ENCODE measurements at regions of chrX and their contacts with region 1.

Region 1: DNA sequence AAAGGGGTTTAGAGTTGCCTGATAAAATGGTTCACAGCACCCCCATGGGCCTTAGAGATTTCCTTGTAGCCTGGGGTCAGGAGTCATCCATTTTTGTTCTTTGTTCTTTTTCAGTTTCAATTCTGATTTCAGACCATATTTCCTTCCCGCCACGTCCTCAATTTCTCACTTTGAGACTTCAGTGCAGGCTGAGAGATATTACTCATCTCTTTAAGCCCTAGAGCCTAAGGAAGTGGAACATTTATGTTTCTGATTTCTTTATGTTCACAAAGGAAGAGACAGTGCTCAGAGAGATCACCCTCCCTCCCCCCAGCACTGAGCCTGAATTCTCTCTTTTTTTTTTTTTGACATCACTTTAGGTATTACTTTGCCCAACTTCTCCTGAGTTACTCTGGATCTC is 56.3 kb downstream of the MSN start:
- DNase-seq: peak; percentile 79
- H3K4me3 Mint-ChIP-seq: peak overlapping the region; percentile 25
- H3K27ac Mint-ChIP-seq: peak overlapping the region; percentile 90
- H3K4me1 Mint-ChIP-seq: peaks cover 67% of the 10 kb centered on the region
- H3K27me3 Mint-ChIP-seq: no peaks in the 10 kb centered on the region

Region 2: DNA sequence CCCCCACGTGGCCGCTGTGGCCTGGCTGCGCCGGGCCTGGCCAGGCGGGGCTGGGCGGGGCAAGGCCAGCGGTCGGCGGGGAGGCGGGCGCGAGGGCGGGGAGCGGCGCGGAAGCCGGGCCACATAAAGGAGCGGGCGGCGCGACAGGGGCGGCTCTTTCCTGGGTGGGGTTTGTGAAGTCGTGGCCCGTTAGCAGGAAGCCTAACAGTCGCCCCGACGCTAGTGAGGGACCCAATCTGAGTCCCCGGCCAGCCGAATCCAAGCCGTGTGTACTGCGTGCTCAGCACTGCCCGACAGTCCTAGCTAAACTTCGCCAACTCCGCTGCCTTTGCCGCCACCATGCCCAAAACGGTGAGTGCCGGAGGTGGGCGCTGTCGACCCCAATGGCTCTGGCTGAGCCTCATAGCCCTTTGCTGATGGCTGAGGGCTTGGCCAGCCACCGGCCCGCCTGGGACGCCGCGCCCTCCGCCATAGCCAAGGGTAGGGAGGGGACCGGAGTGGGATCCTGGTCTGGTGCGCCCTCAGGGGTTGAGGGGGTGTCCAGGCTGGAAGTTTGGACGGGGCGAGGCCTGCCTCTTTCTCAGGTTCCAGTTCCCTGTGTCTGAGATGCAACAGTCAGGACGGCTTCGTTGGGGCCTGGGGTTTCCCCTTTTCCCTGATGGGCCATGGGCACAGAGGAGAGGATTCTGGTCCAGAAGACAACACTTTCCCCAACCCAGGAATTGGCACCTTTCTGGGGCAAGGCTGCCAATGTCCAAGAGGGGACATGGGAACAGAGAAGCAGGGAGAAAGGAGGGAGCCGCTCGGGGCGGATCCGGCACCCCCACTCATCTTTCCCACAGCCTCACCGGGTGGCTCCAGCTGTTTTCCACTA is 56.0 kb before region 1 on chrX and contains the start of gene MSN:
- intact Hi-C with region 1: loop called (anchors 1 kb)
- DNase-seq: peak; percentile 93
- H3K4me3 Mint-ChIP-seq: peak within 1 kb of the TSS; percentile 97
- H3K27ac Mint-ChIP-seq: peak within 1 kb of the TSS; percentile 97
- H3K4me1 Mint-ChIP-seq: peaks cover 30% of the 10 kb centered on the region
- H3K27me3 Mint-ChIP-seq: no peaks in the 10 kb centered on the region
- total RNA-seq, gene MSN: 480 and 482 TPM in 2 replicates

Region 3: GRCh38 chrX:65688403-65688871 is 35.3 kb before region 1 on chrX:
- intact Hi-C with region 1: loop called (anchors 5 kb)
- DNase-seq: no peak
- H3K4me3 Mint-ChIP-seq: peak overlapping the region; percentile 45
- H3K27ac Mint-ChIP-seq: peak overlapping the region; percentile 65
- H3K4me1 Mint-ChIP-seq: peaks cover 57% of the 10 kb centered on the region
- H3K27me3 Mint-ChIP-seq: no peaks in the 10 kb centered on the region

Region 4: GRCh38 chrX:65697915-65698796 is 25.6 kb before region 1 on chrX:
- intact Hi-C with region 1: loop called (anchors 1 kb)
- DNase-seq: peak; percentile 91
- H3K4me3 Mint-ChIP-seq: peak overlapping the region; percentile 77
- H3K27ac Mint-ChIP-seq: peak overlapping the region; percentile 96
- H3K4me1 Mint-ChIP-seq: peaks cover 60% of the 10 kb centered on the region
- H3K27me3 Mint-ChIP-seq: no peaks in the 10 kb centered on the region

Region 5: GRCh38 chrX:65706041-65706828 is 17.5 kb before region 1 on chrX:
- intact Hi-C with region 1: loop called (anchors 1 kb)
- DNase-seq: peak; percentile 66
- H3K4me3 Mint-ChIP-seq: peak overlapping the region; percentile 51
- H3K27ac Mint-ChIP-seq: peak overlapping the region; percentile 92
- H3K4me1 Mint-ChIP-seq: peaks cover 49% of the 10 kb centered on the region
- H3K27me3 Mint-ChIP-seq: no peaks in the 10 kb centered on the region

Region 6: GRCh38 chrX:65744965-65745364 is 21.3 kb after region 1 on chrX:
- intact Hi-C with region 1: loop called (anchors 2 kb)
- DNase-seq: no peak
- H3K4me3 Mint-ChIP-seq: no peak overlapping the region
- H3K27ac Mint-ChIP-seq: no peak overlapping the region
- H3K4me1 Mint-ChIP-seq: peaks cover 36% of the 10 kb centered on the region
- H3K27me3 Mint-ChIP-seq: no peaks in the 10 kb centered on the region

Region 7: GRCh38 chrX:65769564-65770292 is 46.0 kb after region 1 on chrX:
- intact Hi-C with region 1: no loop called
- DNase-seq: no peak
- H3K4me3 Mint-ChIP-seq: no peak overlapping the region
- H3K27ac Mint-ChIP-seq: no peak overlapping the region
- H3K4me1 Mint-ChIP-seq: peaks cover 2% of the 10 kb centered on the region
- H3K27me3 Mint-ChIP-seq: no peaks in the 10 kb centered on the region

Region 8: GRCh38 chrX:65985922-65986588 is 262.3 kb after region 1 on chrX:
- intact Hi-C with region 1: loop called (anchors 1 kb)
- DNase-seq: peak; percentile 83
- H3K4me3 Mint-ChIP-seq: no peak overlapping the region
- H3K27ac Mint-ChIP-seq: peak overlapping the region; percentile 81
- H3K4me1 Mint-ChIP-seq: peaks cover 20% of the 10 kb centered on the region
- H3K27me3 Mint-ChIP-seq: no peaks in the 10 kb centered on the region

Measured in activated CD4-positive, alpha-beta T cell treated with anti-CD3 and anti-CD28 coated beads, Interleukin-2, amount 10 ng/mL, durations not matched to agents 24 days and 14 days (primary cell).